ENCODE measurements at regions of chr20 and their contacts with region 1.

Region 1: GRCh38 chr20:40689943-40690835 is 1.2 kb upstream of the MAFB start:
- ATAC-seq: peak; percentile 18 to 52 (median 30)
- H3K4me3 ChIP-seq: peak overlapping the region; percentile 39 to 54 (median 49)
- H3K27ac ChIP-seq: peak overlapping the region; percentile 61 to 78
- H3K4me1 ChIP-seq: no peaks in the 10 kb centered on the region

Region 2: GRCh38 chr20:39112178-39112743 is 1577.9 kb before region 1 on chr20:
- in situ Hi-C with region 1: loop called in 5 of 9 experiments (anchors 25 kb)
- ATAC-seq: peak; percentile 91 to 99 (median 96)
- H3K4me3 ChIP-seq: no peak overlapping the region
- H3K27ac ChIP-seq: no peak overlapping the region
- H3K4me1 ChIP-seq: peaks cover 18 to 32% of the 10 kb centered on the region in 2 donors

Region 3: GRCh38 chr20:39264506-39265172 is 1425.5 kb before region 1 on chr20:
- in situ Hi-C with region 1: loop called in 2 of 9 experiments (anchors 25 kb)
- ATAC-seq: peak; percentile 64 to 94 (median 78)
- H3K4me3 ChIP-seq: no peak overlapping the region
- H3K27ac ChIP-seq: no peak overlapping the region
- H3K4me1 ChIP-seq: peaks cover 13 to 28% of the 10 kb centered on the region in 2 donors

Region 4: DNA sequence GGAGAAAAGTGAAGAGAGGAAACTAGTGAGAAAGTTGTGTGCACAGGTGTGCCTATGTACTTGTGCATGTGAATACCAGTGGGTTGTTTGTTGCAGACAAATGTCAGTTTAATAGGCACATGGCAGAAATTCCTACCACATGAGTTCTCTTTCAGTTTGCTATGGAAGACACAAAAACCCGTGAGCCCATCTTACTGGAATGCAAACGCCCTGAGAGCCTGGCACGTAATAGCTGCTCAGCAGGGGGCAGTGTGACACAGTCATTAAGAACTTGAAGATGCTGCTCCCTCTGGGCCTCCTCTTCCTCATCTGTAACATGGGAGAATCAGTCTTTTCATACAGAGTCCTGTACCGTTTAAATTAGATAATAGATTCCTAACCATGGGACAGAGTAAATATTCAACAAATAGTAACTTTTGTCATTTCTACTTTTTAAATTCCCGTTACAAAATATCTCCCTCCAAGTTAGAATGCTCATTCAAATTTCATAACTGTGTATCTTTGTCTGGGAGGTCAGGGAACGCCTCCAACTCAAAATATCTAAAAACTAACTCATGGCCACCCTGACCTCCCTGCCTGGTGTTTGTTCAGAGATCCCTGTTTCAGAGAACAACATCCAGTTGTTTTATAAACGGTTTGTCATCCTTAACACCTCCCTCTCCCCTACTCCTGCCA is 804.1 kb before region 1 on chr20:
- in situ Hi-C with region 1: loop called in 3 of 9 experiments (anchors 25 kb)
- ATAC-seq: peak in 3 of 8 experiments; percentile 86 to 98 (median 93)
- H3K4me3 ChIP-seq: no peak overlapping the region
- H3K27ac ChIP-seq: no peak overlapping the region
- H3K4me1 ChIP-seq: no peaks in the 10 kb centered on the region

Region 5: DNA sequence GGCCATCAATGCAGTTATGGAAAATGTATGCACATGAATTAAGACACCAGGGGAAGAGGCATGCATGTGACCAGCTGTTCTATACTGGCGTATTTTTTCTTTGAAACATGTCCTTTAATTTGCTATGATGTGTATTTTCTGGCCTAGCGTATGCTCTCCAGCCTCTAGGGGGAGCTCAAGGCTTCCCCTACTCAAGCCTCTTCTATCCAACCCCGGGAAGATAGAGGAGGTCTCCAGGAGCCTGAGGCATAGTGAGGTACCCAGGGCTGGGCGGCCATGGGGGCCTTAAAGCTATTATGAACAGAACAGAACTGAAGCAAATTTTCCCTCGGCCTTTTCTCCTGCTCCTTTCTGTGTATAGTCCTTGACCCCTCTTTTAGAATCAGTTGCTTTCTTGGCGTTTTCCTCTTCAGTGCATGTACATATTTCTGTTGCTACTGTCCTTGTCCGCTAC is 530.1 kb before region 1 on chr20:
- in situ Hi-C with region 1: loop called in 2 of 9 experiments (anchors 25 kb)
- ATAC-seq: peak in 5 of 8 experiments; percentile 21 to 94 (median 91)
- H3K4me3 ChIP-seq: no peak overlapping the region
- H3K27ac ChIP-seq: no peak overlapping the region
- H3K4me1 ChIP-seq: no peaks in the 10 kb centered on the region

Region 6: DNA sequence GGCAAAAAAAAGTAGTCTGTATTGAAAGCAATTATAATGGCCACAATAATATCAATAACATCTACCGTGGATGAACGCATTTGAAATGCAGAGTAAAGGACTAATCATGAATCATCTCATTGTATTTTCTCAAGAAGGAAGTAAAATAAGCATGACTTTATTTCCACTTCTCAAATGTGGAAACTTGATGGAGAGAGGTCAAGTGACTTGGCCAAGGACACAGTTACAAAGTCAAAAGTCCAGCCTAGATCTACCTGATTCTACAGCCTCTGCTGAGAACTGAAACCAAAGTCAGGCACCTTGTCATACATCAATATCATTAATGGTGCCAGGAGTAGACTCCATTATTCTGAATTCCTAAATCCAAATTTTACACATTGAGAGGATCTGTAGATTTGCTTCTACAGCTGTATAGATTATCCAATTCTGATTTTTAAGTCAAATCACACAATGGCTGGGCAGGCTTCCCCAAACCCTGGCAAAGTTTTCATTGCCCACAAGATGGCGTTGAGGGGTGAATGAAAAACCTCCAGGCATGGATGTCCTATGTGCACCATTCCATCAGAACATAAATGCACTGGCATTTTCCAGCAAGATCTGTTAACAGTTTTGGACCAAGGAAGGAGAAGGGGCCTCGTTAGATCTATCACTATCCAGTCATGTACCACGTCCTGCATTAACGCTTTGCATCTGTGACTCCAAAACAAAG is 424.2 kb before region 1 on chr20:
- in situ Hi-C with region 1: loop called in 2 of 9 experiments (anchors 10 to 25 kb)
- ATAC-seq: peak in 3 of 8 experiments; percentile 64 to 88 (median 78)
- H3K4me3 ChIP-seq: no peak overlapping the region
- H3K27ac ChIP-seq: no peak overlapping the region
- H3K4me1 ChIP-seq: no peaks in the 10 kb centered on the region

Measured in motor neuron (in vitro differentiated cells).